PC-3 (cell line): ENCODE measurements at regions of chr21 and their contacts with region 1.

Region 1: GRCh38 chr21:16179773-16180172 is 450.0 kb downstream of the USP25 start:
- DNase-seq: no peak
- ATAC-seq: no peak
- H3K4me3 ChIP-seq: no peak overlapping the region
- H3K27ac ChIP-seq: no peak overlapping the region
- H3K4me1 ChIP-seq: no peaks in the 10 kb centered on the region
- H3K27me3 ChIP-seq: peaks cover 7% of the 10 kb centered on the region; the same call in 1 of the 2 replicates
- CTCF ChIP-seq: no peak

Region 2: GRCh38 chr21:16199539-16199938 is 19.8 kb after region 1 on chr21:
- CTCF ChIA-PET with region 1: no interaction called
- POLR2A ChIA-PET with region 1: no interaction called
- intact Hi-C with region 1: no loop called
- DNase-seq: no peak
- ATAC-seq: no peak
- H3K4me3 ChIP-seq: no peak overlapping the region
- H3K27ac ChIP-seq: no peak overlapping the region
- H3K4me1 ChIP-seq: no peaks in the 10 kb centered on the region
- H3K27me3 ChIP-seq: peaks cover 48% of the 10 kb centered on the region
- CTCF ChIP-seq: no peak

Region 3: DNA sequence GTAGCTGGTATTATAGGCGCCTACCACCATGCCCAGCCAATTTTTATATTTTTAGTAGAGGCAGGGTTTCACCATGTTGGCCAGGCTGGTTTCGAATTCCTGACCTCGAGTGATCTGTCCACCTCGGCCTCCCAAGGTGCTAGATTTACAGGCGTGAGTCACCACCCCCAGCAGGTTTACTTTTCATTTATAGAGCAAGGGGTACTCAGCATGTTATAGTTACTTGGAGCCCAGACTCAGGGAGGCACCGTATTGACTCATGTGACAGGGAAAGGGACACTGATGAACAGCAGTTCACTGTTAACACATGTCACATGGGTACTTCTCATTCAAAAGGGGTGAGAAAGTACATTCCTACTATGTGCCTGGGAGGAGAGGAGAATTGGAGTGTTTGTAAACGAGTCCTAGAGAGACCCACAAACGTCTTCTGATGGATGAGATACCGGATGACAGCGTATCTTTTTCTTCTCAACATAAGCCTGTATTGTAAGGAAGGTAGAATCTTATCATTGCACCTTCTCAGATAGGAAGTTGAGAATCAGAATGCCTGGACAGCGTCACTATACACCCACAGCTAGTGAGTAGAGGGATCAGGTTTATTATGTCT is 60.0 kb after region 1 on chr21:
- CTCF ChIA-PET with region 1: no interaction called
- POLR2A ChIA-PET with region 1: no interaction called
- intact Hi-C with region 1: loop called (anchors 5 kb)
- DNase-seq: peak; percentile 44
- ATAC-seq: peak; percentile 70
- H3K4me3 ChIP-seq: no peak overlapping the region
- H3K27ac ChIP-seq: no peak overlapping the region
- H3K4me1 ChIP-seq: no peaks in the 10 kb centered on the region
- H3K27me3 ChIP-seq: peaks cover 14% of the 10 kb centered on the region; the same call in 1 of the 2 replicates
- CTCF ChIP-seq: no peak

Region 4: DNA sequence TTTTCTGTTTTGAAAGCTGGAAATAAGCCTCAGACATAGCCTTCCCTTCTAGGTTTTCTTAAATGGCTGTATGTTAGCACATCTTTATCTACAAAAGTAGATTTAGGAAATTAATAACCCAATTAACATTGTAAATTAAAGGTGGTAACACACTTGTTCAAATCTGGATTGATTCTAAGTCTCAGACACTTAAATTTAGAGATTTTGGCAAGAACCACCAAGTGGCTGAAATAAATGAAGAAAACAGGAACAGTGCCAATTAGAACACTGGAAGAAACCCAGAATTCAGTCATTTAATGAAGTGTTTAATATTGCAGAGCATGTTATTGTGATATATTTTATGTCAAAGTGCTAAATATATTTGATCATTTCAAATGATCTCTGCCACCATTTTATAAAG is 178.2 kb after region 1 on chr21:
- CTCF ChIA-PET with region 1: no interaction called
- POLR2A ChIA-PET with region 1: no interaction called
- intact Hi-C with region 1: no loop called
- DNase-seq: no peak
- ATAC-seq: no peak
- H3K4me3 ChIP-seq: no peak overlapping the region
- H3K27ac ChIP-seq: no peak overlapping the region
- H3K4me1 ChIP-seq: no peaks in the 10 kb centered on the region
- H3K27me3 ChIP-seq: no peaks in the 10 kb centered on the region
- CTCF ChIP-seq: no peak

Region 5: GRCh38 chr21:16592381-16592780 is 412.6 kb after region 1 on chr21:
- CTCF ChIA-PET with region 1: no interaction called
- POLR2A ChIA-PET with region 1: no interaction called
- intact Hi-C with region 1: no loop called
- DNase-seq: no peak
- ATAC-seq: no peak
- H3K4me3 ChIP-seq: no peak overlapping the region
- H3K27ac ChIP-seq: no peak overlapping the region
- H3K4me1 ChIP-seq: no peaks in the 10 kb centered on the region
- H3K27me3 ChIP-seq: no peaks in the 10 kb centered on the region
- CTCF ChIP-seq: no peak